HEK293 (cell line): ENCODE measurements at regions of chr17 and their contacts with region 1.

Region 1: GRCh38 chr17:66727639-66728570 is 107.0 kb upstream of the CACNG5 start:
- H3K4me3 ChIP-seq: no peak overlapping the region
- H3K27ac ChIP-seq: no peak overlapping the region
- H3K4me1 ChIP-seq: peaks cover 11% of the 10 kb centered on the region
- CTCF ChIP-seq: peak; percentile 64

Region 2: DNA sequence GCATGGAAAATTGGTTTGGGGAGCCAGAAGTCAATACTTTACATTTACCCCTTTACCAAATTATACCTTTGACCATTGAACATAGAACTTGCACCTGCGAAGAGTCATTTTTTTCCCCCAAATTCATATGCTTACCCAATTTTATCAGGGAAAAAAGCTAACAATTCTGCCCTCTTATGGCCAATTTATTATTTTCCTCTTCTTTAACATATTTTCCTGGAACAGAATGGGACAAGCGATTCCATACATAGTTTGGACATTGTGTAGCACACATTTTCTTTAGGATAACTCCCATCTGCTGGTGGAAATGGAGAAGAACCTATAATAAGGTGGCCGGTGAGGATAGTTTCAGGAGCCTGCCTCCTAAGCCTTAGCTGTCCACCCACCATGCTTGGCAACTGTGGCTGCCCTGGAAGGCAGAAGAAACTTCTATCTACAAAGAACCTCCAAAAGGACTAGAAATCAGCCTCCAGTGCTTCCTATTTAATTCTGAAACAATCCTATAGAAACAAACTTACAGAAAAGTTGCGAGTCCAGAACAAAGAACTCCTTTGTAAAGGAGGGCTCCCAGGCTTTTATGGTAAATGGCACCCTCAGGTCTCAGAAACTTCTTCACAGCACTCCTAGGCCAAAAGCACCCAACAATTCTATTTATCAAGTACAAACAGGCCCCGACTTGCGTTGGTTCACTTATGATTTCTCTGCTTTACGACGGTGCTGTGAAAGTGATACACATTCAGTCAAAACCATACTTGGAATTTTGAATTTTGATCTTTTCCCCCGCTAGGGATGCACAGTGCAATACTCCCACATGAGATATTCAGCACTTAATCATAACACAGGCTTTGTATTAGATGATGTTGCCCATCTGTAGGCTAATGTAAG is 172.5 kb after region 1 on chr17:
- CTCF ChIA-PET with region 1: interaction called, 18 read pairs
- POLR2A ChIA-PET with region 1: interaction called, 3 read pairs
- H3K4me3 ChIP-seq: no peak overlapping the region
- H3K27ac ChIP-seq: no peak overlapping the region
- H3K4me1 ChIP-seq: no peaks in the 10 kb centered on the region; the same call in 1 of the 2 replicates
- CTCF ChIP-seq: peak; percentile 29; the same call in 1 of the 2 replicates

Region 3: DNA sequence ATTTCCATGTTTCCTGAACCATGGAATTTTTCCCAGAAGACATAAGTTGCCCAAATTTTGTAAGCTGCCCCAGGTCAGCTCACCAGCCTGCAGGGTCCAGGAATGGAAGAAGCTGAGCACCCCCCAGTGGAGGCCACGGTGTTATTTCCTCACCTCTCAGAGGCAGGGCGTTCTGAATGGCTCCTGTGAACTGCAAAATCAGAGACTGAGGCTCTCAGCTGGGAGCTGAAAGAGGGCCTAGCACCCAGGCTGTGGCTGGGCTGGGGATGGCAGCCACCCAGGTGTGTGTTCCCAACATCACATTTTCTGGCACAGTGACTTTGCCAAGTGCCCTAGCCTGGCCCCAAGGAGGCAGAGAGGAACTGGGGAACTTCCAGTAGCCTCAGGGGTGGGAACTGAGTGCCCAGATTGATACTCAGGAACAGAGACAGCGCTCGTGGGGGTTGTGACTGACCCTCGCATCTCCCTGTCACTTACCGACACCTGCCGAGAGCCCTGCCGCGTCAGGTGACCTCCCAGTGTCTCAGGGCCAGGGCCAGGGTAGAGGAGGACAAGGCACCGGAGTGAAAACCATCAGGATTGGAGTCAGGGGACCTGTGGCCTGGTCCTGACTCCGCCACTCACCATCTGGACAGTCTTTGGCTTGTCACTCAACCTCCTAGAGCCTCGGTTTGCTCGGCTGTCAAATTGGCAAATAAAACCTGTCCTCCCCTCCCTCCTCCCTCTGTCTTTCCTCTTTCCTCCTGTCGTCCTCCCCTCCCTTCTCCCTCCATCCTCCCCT is 247.9 kb after region 1 on chr17:
- CTCF ChIA-PET with region 1: interaction called, 13 read pairs
- POLR2A ChIA-PET with region 1: no interaction called
- H3K4me3 ChIP-seq: no peak overlapping the region
- H3K27ac ChIP-seq: no peak overlapping the region
- H3K4me1 ChIP-seq: no peaks in the 10 kb centered on the region
- CTCF ChIP-seq: 0 out of 2 replicates have a peak, but pooled peaks have one; percentile 32